ENCODE measurements at regions of chr4 and their contacts with region 1.

Region 1: GRCh38 chr4:119743644-119744043 is 115.0 kb upstream of the PDE5A start:
- DNase-seq: no peak

Region 2: DNA sequence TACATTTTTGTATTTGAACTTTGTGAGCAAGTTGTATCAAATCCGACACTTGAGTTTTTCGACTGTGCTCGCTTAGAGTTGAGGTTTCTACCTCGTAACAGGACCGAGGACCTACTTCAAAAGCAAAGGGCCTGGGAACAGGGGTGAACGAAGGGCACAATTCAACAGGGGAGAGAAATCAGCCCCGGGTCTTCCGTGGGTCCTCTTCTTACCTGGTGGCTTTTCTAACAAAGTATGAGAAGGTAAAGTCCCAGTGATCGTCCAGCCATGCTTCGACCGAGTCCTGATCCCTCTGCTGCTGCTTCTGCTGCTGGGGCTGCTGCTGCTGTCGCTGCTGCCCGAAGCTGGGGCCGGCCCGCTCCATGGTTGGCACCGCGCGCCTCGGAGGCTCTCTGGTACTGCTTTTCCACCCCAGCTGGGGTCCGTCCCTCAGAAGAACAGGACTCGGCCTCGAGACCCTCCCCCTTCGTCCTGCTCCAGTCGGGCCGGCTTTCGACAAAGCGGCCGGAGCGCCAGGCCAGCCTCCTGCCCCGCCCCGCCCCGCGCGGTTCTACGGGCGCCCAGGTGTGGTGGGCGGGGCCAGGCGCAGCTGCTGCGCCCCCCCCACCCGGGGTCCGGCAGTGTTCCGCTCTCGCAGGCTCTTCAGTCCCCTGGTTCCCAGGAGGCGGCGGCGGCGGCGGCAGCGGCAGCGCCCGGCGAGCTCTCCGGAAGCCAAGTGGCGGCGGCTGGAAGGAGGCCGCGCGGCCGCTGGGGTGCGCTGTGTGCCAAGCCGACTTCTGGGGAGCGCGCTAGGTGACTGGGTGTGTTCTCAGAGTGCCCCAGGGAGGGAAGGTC is 115.1 kb before region 1 on chr4 and contains the start of gene PDE5A:
- CTCF ChIA-PET with region 1: interaction called, 9 read pairs
- POLR2A ChIA-PET with region 1: interaction called, 10 read pairs
- DNase-seq: peak; percentile 81

Region 3: DNA sequence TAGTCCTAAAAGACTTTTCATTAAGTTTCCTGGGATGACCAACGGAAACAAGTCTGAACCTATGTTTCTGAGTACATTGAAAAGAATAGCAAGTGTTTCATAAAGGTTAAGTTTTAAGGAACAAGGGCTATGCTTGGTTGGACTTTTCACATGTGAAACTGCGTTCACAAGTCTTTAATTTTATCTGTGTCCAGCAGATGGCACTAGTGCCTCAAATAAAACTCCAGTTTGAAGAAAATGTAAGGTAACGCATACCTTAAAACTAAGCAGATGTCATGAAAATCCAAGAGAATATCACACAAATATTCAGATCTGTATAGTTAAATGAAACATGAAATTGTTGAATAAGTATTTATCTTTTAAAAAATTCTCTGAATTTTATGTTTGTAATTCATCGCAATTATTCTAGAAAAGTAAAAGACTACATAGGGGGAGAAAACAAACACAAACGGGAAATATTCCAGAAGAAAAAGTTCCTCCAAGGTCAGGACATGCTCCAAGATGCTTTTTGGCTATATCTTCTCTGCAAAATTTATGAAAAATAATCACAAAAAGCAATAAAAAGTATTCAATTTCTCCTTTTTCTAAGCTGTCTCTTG is 412.6 kb after region 1 on chr4:
- CTCF ChIA-PET with region 1: no interaction called
- POLR2A ChIA-PET with region 1: no interaction called
- DNase-seq: peak; percentile 22